ENCODE measurements at regions of chr18 and their contacts with region 1.

Region 1: DNA sequence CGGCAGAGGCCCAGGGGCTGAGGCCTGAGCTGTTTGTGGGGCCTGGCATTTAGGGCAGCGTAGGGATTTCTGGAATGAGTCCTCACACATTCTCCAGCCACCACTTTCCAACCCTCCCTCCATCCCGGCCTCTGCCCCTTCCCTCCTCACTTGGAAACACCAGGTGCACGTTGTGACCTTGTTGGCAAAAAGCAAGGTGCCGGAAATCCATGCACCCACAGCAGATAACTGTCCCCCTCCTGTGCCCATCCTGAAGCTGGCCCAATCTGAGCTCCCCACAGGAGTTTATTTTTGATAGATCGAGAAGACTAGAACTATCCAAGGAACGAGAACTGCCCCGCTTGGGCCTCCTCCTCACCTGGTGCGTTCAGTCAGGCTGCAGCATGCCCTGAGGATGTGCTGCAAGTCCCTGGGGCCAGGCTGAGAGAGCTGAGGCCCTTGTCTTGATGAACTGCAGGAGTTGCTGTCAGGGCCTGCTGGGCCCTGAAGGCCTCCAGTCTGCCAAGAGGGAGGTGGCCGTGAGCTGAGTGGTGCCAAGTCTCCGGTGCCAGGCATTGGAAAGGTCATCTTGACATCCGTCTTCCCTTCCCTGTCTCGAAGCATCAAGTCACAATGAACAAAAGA is 55.8 kb downstream of the CTIF start:
- DNase-seq: no peak

Region 2: DNA sequence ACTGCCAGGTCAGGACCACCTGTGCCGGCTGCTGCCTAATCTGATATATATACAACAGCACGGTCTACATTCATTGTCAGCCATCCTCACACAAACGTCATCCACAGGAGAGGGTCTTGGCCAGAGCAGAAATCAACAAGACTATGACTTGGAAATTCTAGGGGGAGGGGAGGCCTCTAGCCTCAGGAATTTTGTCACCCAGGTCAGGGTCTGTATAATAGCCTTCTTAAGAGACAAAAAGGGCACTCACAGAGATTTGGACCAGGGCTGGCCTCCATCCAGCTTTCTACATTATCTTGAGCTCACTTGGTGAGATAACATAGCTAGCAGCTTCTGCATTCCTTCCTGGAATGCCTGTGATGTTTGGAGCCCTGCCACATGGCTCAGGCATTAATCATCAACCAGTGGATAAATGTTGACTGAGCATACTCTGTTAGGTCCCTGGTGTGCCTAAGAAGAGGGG is 106.2 kb before region 1 on chr18:
- intact Hi-C with region 1: loop called (anchors 1 kb)
- DNase-seq: peak; percentile 88

Region 3: GRCh38 chr18:48545757-48546321 is 48.7 kb before region 1 on chr18:
- intact Hi-C with region 1: loop called (anchors 2 kb)
- DNase-seq: peak; percentile 87

Measured in cardiac septum (tissue), 1 donor.